Activated T-helper 1 cell treated with anti-CD3 and anti-CD28 coated beads, Interleukin-12 subunit alpha, Interleukin-12 subunit beta, Interleukin-2, Interleukin-4 antibody, amounts not matched to agents 30 ng/mL and 10 ng/mL and 1 ng/mL, durations not matched to agents 14 hours and 24 hours and 36 hours (primary cell): ENCODE measurements at regions of chr1 and their contacts with region 1.

Region 1: DNA sequence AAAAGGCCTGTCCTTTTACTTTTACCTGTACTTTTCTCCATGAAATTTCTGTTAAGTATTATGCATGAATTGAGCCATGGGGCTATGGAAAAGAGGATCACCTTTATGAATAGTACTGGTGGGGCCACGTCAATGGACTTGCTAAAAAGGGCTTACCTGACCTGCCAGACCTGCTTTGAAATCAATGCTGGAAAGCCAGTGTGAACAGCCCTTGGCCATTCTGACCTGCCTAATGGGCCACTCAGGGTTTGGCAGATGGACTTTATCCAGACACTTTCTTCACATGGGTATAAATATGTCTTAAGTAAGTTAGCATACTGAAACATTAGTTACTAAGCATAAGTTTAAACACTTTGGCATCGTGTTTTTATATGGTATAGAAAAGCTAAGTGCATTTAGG is 8.3 kb upstream of the GUK1 start:
- DNase-seq: no peak
- H3K4me3 Mint-ChIP-seq: no peak overlapping the region
- H3K27ac Mint-ChIP-seq: no peak overlapping the region
- H3K4me1 Mint-ChIP-seq: peaks cover 9% of the 10 kb centered on the region
- H3K27me3 Mint-ChIP-seq: peaks cover 24% of the 10 kb centered on the region

Region 2: DNA sequence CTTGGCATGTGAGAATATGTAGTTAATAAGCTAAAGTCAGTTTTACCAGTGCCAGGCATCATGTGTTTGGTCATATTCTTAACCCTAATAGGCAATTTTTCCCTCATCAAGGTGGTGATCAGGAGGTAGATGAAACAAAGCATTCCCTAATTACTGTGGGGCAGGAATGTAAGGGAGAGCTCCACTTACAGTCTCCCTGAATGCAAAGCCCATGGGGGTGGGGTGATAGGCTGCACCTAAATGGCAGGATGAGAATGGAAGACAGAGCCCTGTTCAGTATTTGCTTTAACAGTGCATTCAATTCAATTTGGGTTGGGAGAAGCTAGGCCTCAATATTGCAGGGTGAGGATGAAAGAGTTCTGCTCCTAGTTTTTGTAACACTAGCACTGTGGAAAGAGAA is 545.0 kb before region 1 on chr1:
- intact Hi-C with region 1: no loop called
- DNase-seq: no peak
- H3K4me3 Mint-ChIP-seq: no peak overlapping the region
- H3K27ac Mint-ChIP-seq: no peak overlapping the region
- H3K4me1 Mint-ChIP-seq: no peaks in the 10 kb centered on the region
- H3K27me3 Mint-ChIP-seq: no peaks in the 10 kb centered on the region

Region 3: DNA sequence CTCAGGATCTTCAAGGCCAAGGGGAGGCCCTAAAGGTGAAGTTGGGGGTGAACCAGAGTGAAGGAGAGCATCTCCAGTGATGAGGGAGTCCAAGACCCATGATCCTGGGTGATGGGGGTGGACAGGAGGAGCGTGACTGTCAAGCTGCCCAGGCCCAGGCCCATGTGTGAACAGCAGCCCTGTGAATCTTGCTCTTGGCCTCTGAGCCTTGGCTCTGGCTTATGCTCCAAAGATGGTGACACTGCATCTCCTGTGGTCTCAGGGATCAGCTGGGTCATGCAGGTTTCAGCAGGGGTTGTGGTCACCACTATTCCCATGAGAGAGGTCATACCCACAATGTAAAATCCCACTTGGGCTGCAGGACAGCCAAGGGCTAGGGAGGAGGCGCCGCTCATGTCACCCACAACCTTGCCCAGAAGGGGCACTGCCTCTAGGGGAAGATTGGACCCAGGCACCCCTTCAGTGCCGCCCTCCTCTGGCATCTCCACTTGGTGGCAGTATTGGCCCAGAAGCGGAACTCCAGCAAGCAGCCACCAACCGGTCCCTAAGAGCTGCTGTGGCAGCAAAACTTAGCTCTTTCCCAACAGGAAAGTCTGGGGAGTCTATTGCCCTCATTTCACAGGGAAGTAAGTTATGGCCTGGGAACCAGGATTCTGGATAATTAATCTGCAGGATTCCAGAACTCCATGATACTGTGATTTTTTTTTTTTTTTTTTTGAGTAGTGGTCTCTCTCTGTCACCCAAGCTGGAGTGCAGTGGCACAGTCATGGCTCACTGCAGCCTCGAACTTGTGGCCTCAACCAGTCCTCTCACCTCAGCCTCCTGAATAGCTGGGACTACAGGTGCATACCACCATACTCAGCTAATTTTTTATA is 132.5 kb before region 1 on chr1:
- intact Hi-C with region 1: loop called (anchors 1 kb)
- DNase-seq: peak; percentile 29
- H3K4me3 Mint-ChIP-seq: no peak overlapping the region
- H3K27ac Mint-ChIP-seq: no peak overlapping the region
- H3K4me1 Mint-ChIP-seq: no peaks in the 10 kb centered on the region
- H3K27me3 Mint-ChIP-seq: peaks cover 18% of the 10 kb centered on the region

Region 4: GRCh38 chr1:228180271-228180958 is 48.6 kb after region 1 on chr1:
- intact Hi-C with region 1: loop called (anchors 2 kb)
- DNase-seq: no peak
- H3K4me3 Mint-ChIP-seq: no peak overlapping the region
- H3K27ac Mint-ChIP-seq: no peak overlapping the region
- H3K4me1 Mint-ChIP-seq: no peaks in the 10 kb centered on the region
- H3K27me3 Mint-ChIP-seq: peaks cover 2% of the 10 kb centered on the region

Region 5: GRCh38 chr1:228332797-228333738 is 201.3 kb after region 1 on chr1:
- intact Hi-C with region 1: no loop called
- DNase-seq: no peak
- H3K4me3 Mint-ChIP-seq: no peak overlapping the region
- H3K27ac Mint-ChIP-seq: no peak overlapping the region
- H3K4me1 Mint-ChIP-seq: no peaks in the 10 kb centered on the region
- H3K27me3 Mint-ChIP-seq: no peaks in the 10 kb centered on the region

Region 6: GRCh38 chr1:228515200-228515834 is 383.6 kb after region 1 on chr1:
- intact Hi-C with region 1: loop called (anchors 1 kb)
- DNase-seq: no peak
- H3K4me3 Mint-ChIP-seq: no peak overlapping the region
- H3K27ac Mint-ChIP-seq: no peak overlapping the region
- H3K4me1 Mint-ChIP-seq: peaks cover 6% of the 10 kb centered on the region
- H3K27me3 Mint-ChIP-seq: peaks cover 19% of the 10 kb centered on the region